OCI-LY7 (cell line): ENCODE measurements at regions of chr10 and their contacts with region 1.

Region 1: GRCh38 chr10:62816331-62817120 is at the start of gene EGR2:
- DNase-seq: peak; percentile 95
- H3K4me3 ChIP-seq: peak within 1 kb of the TSS; percentile 74
- H3K27ac ChIP-seq: peak within 1 kb of the TSS; percentile 60
- H3K4me1 ChIP-seq: peaks cover 16% of the 10 kb centered on the region
- CTCF ChIP-seq: no peak
- total RNA-seq, gene EGR2: 0.08 TPM in 1 of 2 replicates, not detected in the other

Region 2: GRCh38 chr10:62437696-62438095 is 378.8 kb before region 1 on chr10:
- CTCF ChIA-PET with region 1: no interaction called
- POLR2A ChIA-PET with region 1: interaction called, 3 read pairs
- intact Hi-C with region 1: loop called (anchors 2 kb)
- DNase-seq: peak; percentile 78
- H3K4me3 ChIP-seq: no peak overlapping the region
- H3K27ac ChIP-seq: no peak overlapping the region
- H3K4me1 ChIP-seq: no peaks in the 10 kb centered on the region
- CTCF ChIP-seq: peak; percentile 97

Region 3: GRCh38 chr10:62594093-62594520 is 222.4 kb before region 1 on chr10:
- CTCF ChIA-PET with region 1: no interaction called
- POLR2A ChIA-PET with region 1: no interaction called
- intact Hi-C with region 1: loop called (anchors 5 kb)
- DNase-seq: peak; percentile 75
- H3K4me3 ChIP-seq: no peak overlapping the region
- H3K27ac ChIP-seq: no peak overlapping the region
- H3K4me1 ChIP-seq: peaks cover 6% of the 10 kb centered on the region
- CTCF ChIP-seq: peak; percentile 99

Region 4: GRCh38 chr10:62637249-62638061 is 179.1 kb before region 1 on chr10:
- CTCF ChIA-PET with region 1: interaction called, 15 read pairs
- POLR2A ChIA-PET with region 1: interaction called, 10 read pairs
- intact Hi-C with region 1: loop called (anchors 1 kb)
- DNase-seq: peak; percentile 82
- H3K4me3 ChIP-seq: peak overlapping the region; percentile 63
- H3K27ac ChIP-seq: peak overlapping the region; percentile 90
- H3K4me1 ChIP-seq: peaks cover 87% of the 10 kb centered on the region
- CTCF ChIP-seq: no peak

Region 5: DNA sequence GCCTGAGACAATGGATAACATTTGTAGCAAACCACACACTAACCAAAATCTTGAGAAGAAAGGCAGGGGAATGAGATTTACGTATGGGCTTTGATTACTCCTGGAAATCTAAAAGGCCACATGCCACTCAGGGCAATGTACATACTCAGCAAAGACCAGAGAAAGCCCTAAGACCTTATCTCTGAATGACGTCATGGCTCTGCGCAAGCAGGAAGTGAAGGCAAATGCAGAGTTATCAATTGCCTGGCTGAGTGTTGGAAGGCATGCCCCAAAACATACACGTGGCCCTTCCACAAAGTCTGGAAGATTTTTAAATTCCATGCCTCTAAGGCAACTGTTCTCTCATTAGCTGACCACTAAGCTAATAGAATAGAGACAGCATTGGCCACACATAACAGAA is 225.7 kb after region 1 on chr10:
- CTCF ChIA-PET with region 1: interaction called, 11 read pairs
- POLR2A ChIA-PET with region 1: no interaction called
- intact Hi-C with region 1: no loop called
- DNase-seq: no peak
- H3K4me3 ChIP-seq: no peak overlapping the region
- H3K27ac ChIP-seq: no peak overlapping the region
- H3K4me1 ChIP-seq: no peaks in the 10 kb centered on the region
- CTCF ChIP-seq: no peak

Region 6: DNA sequence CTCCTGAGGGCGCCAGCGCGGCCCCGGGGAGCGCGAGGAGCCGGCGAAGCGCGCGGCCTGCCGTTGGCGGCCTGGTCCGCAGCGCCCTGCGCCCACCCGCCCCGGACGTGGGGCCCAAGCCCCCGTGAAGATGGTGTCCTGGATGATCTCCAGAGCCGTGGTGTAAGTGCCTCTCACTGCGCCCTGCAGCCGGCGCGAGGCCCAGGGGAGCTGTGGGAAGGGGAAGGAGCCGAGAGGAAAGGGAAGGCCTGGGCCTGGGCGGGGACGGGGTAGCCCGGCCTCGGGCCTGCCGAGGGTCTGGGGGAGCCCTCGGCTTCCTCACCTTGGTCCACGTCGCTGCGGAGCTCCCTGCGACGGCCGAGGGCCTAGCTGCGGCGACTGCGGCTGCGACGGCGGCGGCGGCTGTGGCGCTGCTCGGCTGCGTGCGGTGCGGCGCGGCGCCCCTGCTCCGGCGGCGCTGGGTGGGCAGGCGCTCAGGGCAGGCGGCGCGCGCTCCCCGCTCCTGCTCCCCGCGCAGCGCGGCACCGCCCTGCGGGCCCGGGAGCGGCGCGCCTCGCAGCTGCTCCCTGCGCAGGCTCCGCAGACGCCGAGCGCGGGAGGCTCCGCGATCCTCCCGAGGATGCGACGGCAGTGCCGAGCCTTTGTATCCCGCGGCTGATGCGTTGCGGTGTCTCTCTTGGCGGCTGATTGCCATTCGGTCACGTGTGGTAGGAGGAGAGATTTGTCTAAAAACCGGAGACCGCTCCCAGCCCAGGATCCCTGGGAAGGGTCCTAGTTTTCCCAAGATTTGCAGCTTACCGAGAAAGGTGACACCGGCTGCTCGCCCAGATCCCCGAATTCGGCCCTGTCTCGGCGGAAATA is 705.1 kb after region 1 on chr10:
- CTCF ChIA-PET with region 1: no interaction called
- POLR2A ChIA-PET with region 1: no interaction called
- intact Hi-C with region 1: loop called (anchors 10 kb)
- DNase-seq: peak; percentile 79
- H3K4me3 ChIP-seq: peak overlapping the region; percentile 76
- H3K27ac ChIP-seq: peak overlapping the region; percentile 73
- H3K4me1 ChIP-seq: peaks cover 29% of the 10 kb centered on the region
- CTCF ChIP-seq: no peak